ENCODE measurements at regions of chr6 and their contacts with region 1.

Region 1: GRCh38 chr6:36885461-36886401 is at the start of gene C6orf89:
- DNase-seq: peak; percentile 99
- H3K4me3 ChIP-seq: peak within 1 kb of the TSS; percentile 70 to 88 (median 78)
- H3K27ac ChIP-seq: peak within 1 kb of the TSS; percentile 85 to 90 (median 88)
- H3K4me1 ChIP-seq: peaks cover 9 to 51% (median 29%) of the 10 kb centered on the region in 6 donors
- H3K27me3 ChIP-seq: no peaks in the 10 kb centered on the region
- CTCF ChIP-seq: peak; percentile 88 to 98 (median 92)
- POLR2A ChIP-seq: peak; percentile 29 to 53 (median 32)
- total RNA-seq, gene C6orf89: 31.5 to 49.8 (median 37.9) TPM

Region 2: DNA sequence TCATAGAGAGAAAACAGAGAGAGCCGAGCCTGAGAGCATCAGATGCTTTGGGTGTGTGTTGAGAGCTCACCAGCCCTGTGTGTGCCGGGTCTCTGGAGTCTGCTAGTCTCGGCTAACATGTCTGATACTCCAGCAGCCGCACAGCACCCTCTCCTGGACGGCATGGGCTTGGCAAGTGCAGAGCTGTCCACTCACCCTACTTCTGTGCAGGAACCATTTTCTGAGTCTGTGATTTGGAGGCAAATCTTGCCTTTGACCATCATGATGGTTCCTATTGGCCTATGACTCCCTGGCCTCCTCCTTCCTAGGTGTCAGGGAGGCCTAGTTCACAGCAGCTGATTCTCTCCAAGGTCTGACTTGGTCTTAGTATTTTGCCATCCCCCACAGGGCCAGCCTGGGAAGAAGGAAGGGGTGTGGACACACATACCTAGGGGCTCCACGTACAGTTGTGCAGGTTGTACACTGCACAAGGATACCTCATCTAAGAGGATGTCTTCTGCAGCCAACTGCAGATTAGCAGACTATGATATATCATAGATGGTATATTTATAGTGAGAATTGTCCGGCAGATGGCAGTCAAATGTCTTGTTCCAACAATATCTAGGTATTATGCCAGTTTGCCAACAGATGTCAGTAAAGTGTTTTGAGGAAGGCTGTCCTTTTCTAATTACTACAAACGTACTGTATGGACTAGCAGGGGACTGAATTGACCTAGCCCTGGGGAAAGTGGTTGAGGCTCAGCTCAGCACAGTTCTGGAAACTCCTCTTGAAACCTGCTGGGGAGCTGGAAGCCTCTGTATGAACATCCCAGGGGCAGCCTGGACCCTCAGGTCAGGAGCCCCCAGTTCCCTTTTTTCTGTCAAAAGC is 132.7 kb after region 1 on chr6:
- intact Hi-C with region 1: loop called (anchors 10 kb)
- DNase-seq: peak; percentile 96
- H3K4me3 ChIP-seq: peak overlapping the region in 1 of 8 donors; percentile 10
- H3K27ac ChIP-seq: peak overlapping the region in 7 of 8 donors; percentile 20 to 75 (median 47)
- H3K4me1 ChIP-seq: peaks cover 8 to 53% (median 29%) of the 10 kb centered on the region in 6 donors
- H3K27me3 ChIP-seq: no peaks in the 10 kb centered on the region
- CTCF ChIP-seq: peak; percentile 91 to 98 (median 94)
- POLR2A ChIP-seq: no peak